A549 (cell line): ENCODE measurements at regions of chr11 and their contacts with region 1.

Region 1: DNA sequence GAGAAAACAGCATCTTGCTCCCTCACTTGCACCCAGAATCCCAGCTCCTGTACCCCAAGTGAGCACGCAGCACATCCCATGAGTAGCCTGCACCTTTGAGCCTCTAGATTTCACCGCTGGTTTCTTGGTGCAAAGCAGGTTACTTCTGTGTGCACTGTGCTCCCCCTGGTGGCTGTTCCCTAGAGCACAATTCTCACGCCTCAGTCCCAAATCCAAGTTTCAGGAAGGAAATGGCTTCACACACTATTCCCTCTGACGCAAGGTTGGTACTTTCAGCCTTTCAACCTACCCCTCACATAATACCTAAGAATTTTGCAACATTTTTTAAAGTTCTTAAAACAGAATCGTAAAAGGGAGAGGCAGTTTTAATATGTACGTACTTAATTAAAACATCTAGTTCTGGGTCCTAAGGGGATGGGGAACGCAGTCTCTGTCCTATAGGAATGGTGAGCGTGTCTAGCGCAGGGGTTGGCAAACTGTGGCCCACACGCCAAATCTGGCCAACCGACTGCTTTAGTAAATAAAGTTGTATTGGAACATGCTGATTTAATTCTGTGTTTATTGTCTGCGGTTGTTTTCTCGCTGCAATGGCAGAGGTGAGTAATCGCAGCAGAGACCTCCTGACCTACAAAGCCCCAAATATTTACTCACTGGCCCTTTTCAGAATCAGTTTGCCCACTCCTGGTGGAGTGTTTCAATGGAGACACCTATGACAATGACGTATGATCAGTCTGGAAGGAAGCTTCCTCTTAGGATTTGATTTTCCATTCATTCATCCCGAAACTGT is 27.5 kb downstream of the DHCR7 start:
- DNase-seq: peak; percentile 62 to 74
- ATAC-seq: peak; percentile 65 to 83; a peak in 4 of 6 replicates
- H3K4me3 ChIP-seq: no peak overlapping the region
- H3K27ac ChIP-seq: no peak overlapping the region
- H3K4me1 ChIP-seq: no peaks in the 10 kb centered on the region
- CTCF ChIP-seq: peak; percentile 72
- EP300 ChIP-seq: no peak
- POLR2A ChIP-seq: no peak
- RAD21 ChIP-seq: peak; percentile 79 to 83

Region 2: DNA sequence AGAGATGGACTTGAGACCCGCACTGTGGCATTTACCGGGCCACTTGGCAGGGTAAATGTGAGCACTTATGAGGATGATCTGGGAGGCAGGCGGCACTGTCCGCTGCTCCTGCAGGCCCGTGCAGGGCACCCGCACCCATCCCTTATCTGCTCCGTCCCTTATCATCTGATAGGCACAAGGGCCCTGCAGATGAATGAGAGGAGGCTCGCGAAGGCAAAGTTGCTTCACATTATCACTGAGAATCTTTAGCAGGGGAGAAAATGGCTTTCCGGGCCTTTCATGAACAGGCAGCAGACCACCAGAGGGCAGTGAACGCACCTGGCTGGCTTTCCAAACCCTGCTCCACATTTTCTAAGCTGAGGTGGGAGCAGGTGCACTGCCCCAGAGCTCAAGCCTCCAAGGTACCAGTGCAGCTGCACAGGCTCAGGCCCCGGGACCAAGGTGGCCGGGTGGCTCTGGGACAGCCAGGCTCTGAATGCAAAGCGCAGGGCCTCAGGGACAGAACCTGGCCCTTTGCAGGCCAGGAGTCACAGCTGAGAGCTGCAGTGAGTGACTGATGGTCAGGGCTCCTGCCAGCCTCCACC is 333.9 kb before region 1 on chr11:
- CTCF ChIA-PET with region 1: interaction called, 10 read pairs
- POLR2A ChIA-PET with region 1: no interaction called
- DNase-seq: peak; percentile 31 to 47
- ATAC-seq: peak; percentile 64 to 85; a peak in 5 of 6 replicates
- H3K4me3 ChIP-seq: no peak overlapping the region
- H3K27ac ChIP-seq: no peak overlapping the region
- H3K4me1 ChIP-seq: no peaks in the 10 kb centered on the region
- CTCF ChIP-seq: peak; percentile 62
- EP300 ChIP-seq: no peak
- POLR2A ChIP-seq: no peak
- RAD21 ChIP-seq: peak; percentile 67 to 71

Region 3: GRCh38 chr11:71431138-71431541 is 10.5 kb after region 1 on chr11:
- CTCF ChIA-PET with region 1: interaction called, 15 read pairs
- POLR2A ChIA-PET with region 1: interaction called, 3 read pairs
- DNase-seq: no peak
- ATAC-seq: no peak
- H3K4me3 ChIP-seq: no peak overlapping the region
- H3K27ac ChIP-seq: no peak overlapping the region
- H3K4me1 ChIP-seq: peaks cover 7% of the 10 kb centered on the region; the same call in 2 of the 3 replicates
- CTCF ChIP-seq: no peak
- EP300 ChIP-seq: no peak
- POLR2A ChIP-seq: no peak
- RAD21 ChIP-seq: no peak